ENCODE measurements at regions of chr11 and their contacts with region 1.

Region 1: GRCh38 chr11:131674051-131674755 is 303.8 kb downstream of the NTM start:
- DNase-seq: peak; percentile 86
- ATAC-seq: peak; percentile 62
- H3K4me3 Mint-ChIP-seq: no peak overlapping the region
- H3K27ac Mint-ChIP-seq: no peak overlapping the region
- H3K4me1 Mint-ChIP-seq: peaks cover 32% of the 10 kb centered on the region
- H3K27me3 Mint-ChIP-seq: no peaks in the 10 kb centered on the region; the same call in 1 of the 2 replicates
- CTCF ChIP-seq: peak; percentile 98

Region 2: GRCh38 chr11:131025020-131025419 is 649.2 kb before region 1 on chr11:
- CTCF ChIA-PET with region 1: interaction called, 10 read pairs
- POLR2A ChIA-PET with region 1: no interaction called
- DNase-seq: peak; percentile 28
- ATAC-seq: peak; percentile 97
- H3K4me3 Mint-ChIP-seq: no peak overlapping the region
- H3K27ac Mint-ChIP-seq: no peak overlapping the region
- H3K4me1 Mint-ChIP-seq: no peaks in the 10 kb centered on the region
- H3K27me3 Mint-ChIP-seq: no peaks in the 10 kb centered on the region; the same call in 1 of the 2 replicates
- CTCF ChIP-seq: peak; percentile 26; the same call in 1 of the 2 replicates

Region 3: GRCh38 chr11:131370901-131371790 is 303.1 kb before region 1 on chr11:
- CTCF ChIA-PET with region 1: no interaction called
- POLR2A ChIA-PET with region 1: no interaction called
- DNase-seq: no peak
- ATAC-seq: peak; percentile 8; the same call in 1 of the 2 replicates
- H3K4me3 Mint-ChIP-seq: no peak overlapping the region
- H3K27ac Mint-ChIP-seq: no peak overlapping the region
- H3K4me1 Mint-ChIP-seq: peaks cover 21% of the 10 kb centered on the region
- H3K27me3 Mint-ChIP-seq: peaks cover 4% of the 10 kb centered on the region; the same call in 1 of the 2 replicates
- CTCF ChIP-seq: no peak

Region 4: DNA sequence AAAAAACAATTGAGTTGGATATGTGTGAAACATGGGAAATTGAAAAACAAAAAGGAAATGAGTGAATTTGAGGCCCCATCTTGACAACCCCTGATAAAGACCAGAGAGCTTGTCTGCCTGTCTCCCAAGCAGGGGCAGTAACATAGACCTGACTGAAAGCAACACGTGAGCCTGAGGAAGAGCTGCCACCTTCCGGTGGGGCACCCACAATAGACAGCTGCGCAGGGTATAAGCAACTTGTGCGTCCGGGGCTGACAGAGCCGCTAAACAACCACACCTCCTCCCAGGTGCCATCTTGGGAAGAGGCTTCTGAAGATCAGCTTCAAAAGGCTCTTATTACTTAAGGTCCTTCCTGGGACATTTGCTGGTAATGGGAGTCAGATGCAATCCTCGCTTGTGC is 137.0 kb before region 1 on chr11:
- CTCF ChIA-PET with region 1: interaction called, 10 read pairs
- POLR2A ChIA-PET with region 1: no interaction called
- DNase-seq: no peak
- ATAC-seq: no peak
- H3K4me3 Mint-ChIP-seq: no peak overlapping the region
- H3K27ac Mint-ChIP-seq: no peak overlapping the region
- H3K4me1 Mint-ChIP-seq: peaks cover 4% of the 10 kb centered on the region
- H3K27me3 Mint-ChIP-seq: no peaks in the 10 kb centered on the region
- CTCF ChIP-seq: no peak

Region 5: GRCh38 chr11:131584785-131585592 is 89.2 kb before region 1 on chr11:
- CTCF ChIA-PET with region 1: interaction called, 114 read pairs
- POLR2A ChIA-PET with region 1: interaction called, 3 read pairs
- DNase-seq: peak; percentile 82
- ATAC-seq: peak; percentile 95
- H3K4me3 Mint-ChIP-seq: no peak overlapping the region
- H3K27ac Mint-ChIP-seq: peak overlapping the region; percentile 39; the same call in 1 of the 2 replicates
- H3K4me1 Mint-ChIP-seq: peaks cover 52% of the 10 kb centered on the region
- H3K27me3 Mint-ChIP-seq: no peaks in the 10 kb centered on the region; the same call in 1 of the 2 replicates
- CTCF ChIP-seq: peak; percentile 70

Region 6: DNA sequence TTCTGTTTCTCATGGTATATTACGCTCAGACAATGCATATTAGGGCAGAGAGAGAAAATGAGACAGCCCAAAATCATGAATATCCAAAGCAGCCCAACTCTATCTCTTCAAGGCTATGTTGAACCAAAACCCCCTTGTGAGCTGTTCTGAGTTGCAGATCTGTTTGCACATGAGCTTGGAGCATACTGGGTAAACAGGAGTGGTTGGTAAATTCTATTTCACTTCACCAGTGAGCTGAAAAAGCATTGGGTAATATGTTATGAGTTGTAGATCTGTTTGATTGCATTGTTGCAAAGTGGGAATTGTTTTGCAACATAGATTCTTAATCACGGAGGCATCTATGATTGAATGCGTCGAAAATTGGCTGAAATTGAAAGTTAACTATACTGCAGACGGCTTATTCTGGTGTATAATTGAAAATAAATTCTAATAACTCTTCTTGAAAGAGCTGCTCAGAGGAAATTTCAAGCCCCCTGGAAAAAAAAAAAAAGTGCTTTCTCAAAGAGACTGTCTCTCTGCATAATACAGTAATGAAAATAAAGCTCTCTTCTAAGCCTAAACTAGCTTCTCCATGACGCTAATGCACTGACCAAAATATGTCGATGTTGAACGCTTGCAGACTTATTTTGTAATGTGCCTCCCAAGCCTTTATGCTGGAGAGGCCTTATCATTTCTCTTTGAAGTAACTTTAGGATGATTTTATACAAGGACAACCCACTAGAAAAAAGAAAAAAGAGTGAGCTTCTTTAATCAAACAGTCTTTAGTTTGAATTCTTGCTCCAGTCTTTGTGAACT is 40.1 kb before region 1 on chr11:
- CTCF ChIA-PET with region 1: interaction called, 12 read pairs
- POLR2A ChIA-PET with region 1: no interaction called
- DNase-seq: no peak
- ATAC-seq: no peak
- H3K4me3 Mint-ChIP-seq: no peak overlapping the region
- H3K27ac Mint-ChIP-seq: 0 out of 2 replicates have a peak overlapping the region, but pooled peaks have one; percentile 34
- H3K4me1 Mint-ChIP-seq: peaks cover 46% of the 10 kb centered on the region
- H3K27me3 Mint-ChIP-seq: no peaks in the 10 kb centered on the region
- CTCF ChIP-seq: no peak

Region 7: GRCh38 chr11:131688051-131688698 is 14.0 kb after region 1 on chr11:
- CTCF ChIA-PET with region 1: interaction called, 33 read pairs
- POLR2A ChIA-PET with region 1: no interaction called
- DNase-seq: peak; percentile 81
- ATAC-seq: peak; percentile 62
- H3K4me3 Mint-ChIP-seq: no peak overlapping the region
- H3K27ac Mint-ChIP-seq: no peak overlapping the region
- H3K4me1 Mint-ChIP-seq: 0 out of 2 replicates have a peak, but pooled peaks cover 6% of the 10 kb centered on the region
- H3K27me3 Mint-ChIP-seq: peaks cover 24% of the 10 kb centered on the region
- CTCF ChIP-seq: peak; percentile 81

Measured in WTC11 (cell line).